ENCODE measurements at regions of chr2 and their contacts with region 1.

Region 1: DNA sequence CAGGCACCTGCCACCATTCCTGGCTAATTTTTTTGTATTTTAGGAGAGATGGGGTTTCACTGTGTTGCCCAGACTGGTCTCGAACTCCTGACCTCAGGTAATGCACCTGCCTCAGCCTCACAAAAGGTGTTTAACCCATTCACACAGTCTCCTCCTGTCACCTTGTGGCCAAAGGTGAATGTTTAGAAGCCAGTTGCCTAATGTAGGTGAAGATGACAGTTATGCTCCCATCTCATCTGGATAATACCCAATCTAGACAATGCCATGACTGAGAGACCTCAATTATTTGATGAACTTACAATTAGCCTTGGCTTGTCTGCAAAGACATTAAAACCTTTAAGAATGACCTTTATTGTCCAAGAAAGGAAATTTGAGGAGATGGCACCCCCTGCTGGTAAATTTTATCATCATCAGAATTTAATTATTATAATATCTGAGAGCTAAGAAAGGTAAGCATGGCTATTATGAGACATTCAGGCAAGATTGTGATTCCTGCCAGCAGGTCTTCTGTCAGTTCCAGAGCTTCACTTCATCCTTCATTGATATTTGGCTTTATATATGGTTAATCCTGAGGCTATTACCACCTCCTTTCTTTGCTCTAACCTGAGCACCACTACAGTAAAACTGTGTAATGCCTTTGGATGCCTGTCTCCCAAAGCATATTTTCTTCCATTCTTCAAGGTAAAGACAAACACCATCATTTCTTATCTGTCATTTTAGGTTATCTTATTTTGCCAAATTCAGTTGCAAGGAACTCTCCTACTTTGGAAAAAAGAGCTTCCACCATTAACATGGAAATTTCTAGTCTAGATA is 117.6 kb downstream of the FAM124B start:
- DNase-seq: peak; percentile 30
- ATAC-seq: peak; percentile 80
- H3K4me3 ChIP-seq: no peak overlapping the region
- H3K27ac ChIP-seq: no peak overlapping the region
- H3K4me1 ChIP-seq: no peaks in the 10 kb centered on the region
- H3K27me3 ChIP-seq: peaks cover 11% of the 10 kb centered on the region
- CTCF ChIP-seq: peak; percentile 83

Region 2: DNA sequence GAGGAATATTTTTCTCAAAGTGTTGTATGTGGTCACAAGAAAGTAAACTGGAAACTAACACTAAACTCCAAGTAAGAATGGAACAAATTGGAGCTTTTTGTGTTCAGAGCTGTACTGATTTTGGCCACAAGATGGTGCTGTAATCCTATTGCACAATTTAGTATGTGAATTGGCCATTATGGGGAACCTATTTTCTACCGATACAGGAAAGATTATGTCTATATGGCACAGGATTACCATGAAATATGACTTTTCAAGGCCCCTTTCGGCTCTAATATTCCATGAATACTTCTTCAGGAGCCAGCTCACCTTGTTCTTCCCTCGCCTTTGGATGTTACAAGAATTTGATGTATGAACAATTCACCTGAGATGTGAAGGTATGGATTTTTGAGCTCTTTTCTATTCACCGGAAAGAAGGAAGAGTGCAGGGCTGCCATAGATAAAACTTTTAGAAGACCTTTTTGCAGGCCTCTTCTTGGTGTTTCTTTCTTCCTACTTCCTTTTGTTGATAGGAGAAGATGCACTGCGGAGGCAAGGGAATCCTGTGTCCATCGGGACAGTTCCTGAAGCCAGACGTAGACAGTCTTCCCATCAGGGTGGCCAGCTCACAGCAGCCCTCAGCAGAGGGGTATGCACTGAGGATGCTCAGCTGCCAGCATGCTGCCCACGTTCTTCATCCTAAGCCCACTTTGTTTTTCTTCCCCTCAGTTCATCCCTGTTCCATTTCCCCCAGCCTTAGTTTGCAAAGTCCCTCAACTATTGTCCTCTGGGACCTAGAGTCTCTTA is 313.8 kb before region 1 on chr2:
- CTCF ChIA-PET with region 1: interaction called, 28 read pairs
- POLR2A ChIA-PET with region 1: no interaction called
- in situ Hi-C with region 1: no loop called
- intact Hi-C with region 1: loop called (anchors 1 kb)
- DNase-seq: peak; percentile 45
- ATAC-seq: peak; percentile 75
- H3K4me3 ChIP-seq: no peak overlapping the region
- H3K27ac ChIP-seq: no peak overlapping the region
- H3K4me1 ChIP-seq: no peaks in the 10 kb centered on the region
- H3K27me3 ChIP-seq: no peaks in the 10 kb centered on the region
- CTCF ChIP-seq: peak; percentile 84; the same call in 1 of the 2 replicates

Region 3: GRCh38 chr2:223993621-223994232 is 290.6 kb before region 1 on chr2:
- CTCF ChIA-PET with region 1: interaction called, 43 read pairs
- POLR2A ChIA-PET with region 1: no interaction called
- in situ Hi-C with region 1: no loop called
- intact Hi-C with region 1: loop called (anchors 1 kb)
- DNase-seq: peak; percentile 73
- ATAC-seq: peak; percentile 83
- H3K4me3 ChIP-seq: no peak overlapping the region
- H3K27ac ChIP-seq: no peak overlapping the region
- H3K4me1 ChIP-seq: no peaks in the 10 kb centered on the region
- H3K27me3 ChIP-seq: no peaks in the 10 kb centered on the region
- CTCF ChIP-seq: peak; percentile 84

Region 4: GRCh38 chr2:224039124-224039940 is 245.0 kb before region 1 on chr2 and contains the start of gene SERPINE2:
- CTCF ChIA-PET with region 1: no interaction called
- POLR2A ChIA-PET with region 1: no interaction called
- in situ Hi-C with region 1: no loop called
- intact Hi-C with region 1: loop called (anchors 1 kb)
- DNase-seq: no peak
- ATAC-seq: peak; percentile 89
- H3K4me3 ChIP-seq: peak within 1 kb of the TSS; percentile 53 to 64
- H3K27ac ChIP-seq: no peak within 1 kb of the TSS
- H3K4me1 ChIP-seq: peaks cover 6% of the 10 kb centered on the region; the same call in 1 of the 2 replicates
- H3K27me3 ChIP-seq: peaks cover 45% of the 10 kb centered on the region
- CTCF ChIP-seq: peak; percentile 76
- total RNA-seq, gene SERPINE2: 3.1 TPM

Region 5: DNA sequence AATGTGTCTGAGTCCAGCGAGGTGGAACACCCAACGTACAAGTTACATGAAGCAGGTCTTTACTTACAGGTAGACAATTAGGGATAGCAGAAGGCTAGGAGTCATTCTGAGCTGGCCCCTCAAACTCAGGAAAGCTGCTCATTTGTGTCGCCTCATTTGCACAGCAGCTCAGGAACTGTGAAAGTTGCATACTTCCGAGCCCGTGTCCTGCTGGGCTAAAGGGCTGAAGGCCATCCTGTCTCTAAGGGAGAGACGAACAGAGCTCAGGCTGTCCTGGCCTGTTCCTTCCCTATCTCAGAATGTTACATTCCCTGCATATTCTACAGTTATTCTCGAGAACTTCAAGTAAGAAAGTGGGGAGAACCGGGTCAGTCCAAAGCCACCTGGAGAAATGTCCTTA is 18.6 kb after region 1 on chr2:
- CTCF ChIA-PET with region 1: no interaction called
- POLR2A ChIA-PET with region 1: no interaction called
- in situ Hi-C with region 1: no loop called
- intact Hi-C with region 1: no loop called
- DNase-seq: no peak
- ATAC-seq: no peak
- H3K4me3 ChIP-seq: no peak overlapping the region
- H3K27ac ChIP-seq: no peak overlapping the region
- H3K4me1 ChIP-seq: no peaks in the 10 kb centered on the region
- H3K27me3 ChIP-seq: no peaks in the 10 kb centered on the region
- CTCF ChIP-seq: no peak

Region 6: DNA sequence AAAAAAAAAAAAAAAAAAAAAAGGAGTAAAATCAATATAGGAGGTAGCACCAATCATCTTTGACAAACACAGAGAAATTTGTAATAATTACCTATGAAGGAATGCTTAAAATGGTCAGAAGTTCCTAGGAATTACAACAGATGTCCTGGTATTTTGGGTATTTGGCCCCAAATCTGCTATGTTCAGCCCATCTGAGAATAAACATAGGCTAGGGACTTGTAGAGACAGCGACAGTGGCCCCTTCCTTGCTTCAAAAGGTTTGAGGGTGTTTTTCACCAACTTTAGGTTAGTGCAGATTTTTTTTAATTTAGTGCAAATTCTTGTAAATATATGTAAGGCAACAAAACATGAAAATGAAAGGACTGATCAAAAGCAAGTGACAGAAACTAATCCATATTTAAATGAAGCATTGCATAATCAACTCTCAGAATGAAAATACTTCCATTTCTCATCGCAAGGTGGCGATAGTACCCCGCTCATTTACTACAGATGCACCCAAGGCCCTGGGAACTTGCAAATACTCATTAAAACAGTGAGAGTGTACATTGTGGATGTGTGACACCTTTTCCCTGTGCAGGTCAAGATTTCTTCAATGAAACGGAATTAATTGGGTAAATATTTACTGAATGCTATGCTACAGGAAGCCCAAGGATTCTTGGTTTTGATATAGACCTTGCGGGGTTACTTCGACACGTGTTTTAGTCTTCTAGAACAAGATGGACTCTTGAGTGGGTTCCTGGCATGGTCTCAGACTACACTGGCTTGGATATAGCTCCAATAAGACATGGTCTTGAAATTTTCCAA is 73.0 kb after region 1 on chr2:
- CTCF ChIA-PET with region 1: interaction called, 12 read pairs
- POLR2A ChIA-PET with region 1: no interaction called
- in situ Hi-C with region 1: no loop called
- intact Hi-C with region 1: no loop called
- DNase-seq: peak; percentile 69
- ATAC-seq: peak; percentile 86
- H3K4me3 ChIP-seq: no peak overlapping the region
- H3K27ac ChIP-seq: no peak overlapping the region
- H3K4me1 ChIP-seq: 0 out of 2 replicates have a peak, but pooled peaks cover 2% of the 10 kb centered on the region
- H3K27me3 ChIP-seq: no peaks in the 10 kb centered on the region
- CTCF ChIP-seq: peak; percentile 78